HEK293T (cell line): ENCODE measurements at regions of chr12 and their contacts with region 1.

Region 1: DNA sequence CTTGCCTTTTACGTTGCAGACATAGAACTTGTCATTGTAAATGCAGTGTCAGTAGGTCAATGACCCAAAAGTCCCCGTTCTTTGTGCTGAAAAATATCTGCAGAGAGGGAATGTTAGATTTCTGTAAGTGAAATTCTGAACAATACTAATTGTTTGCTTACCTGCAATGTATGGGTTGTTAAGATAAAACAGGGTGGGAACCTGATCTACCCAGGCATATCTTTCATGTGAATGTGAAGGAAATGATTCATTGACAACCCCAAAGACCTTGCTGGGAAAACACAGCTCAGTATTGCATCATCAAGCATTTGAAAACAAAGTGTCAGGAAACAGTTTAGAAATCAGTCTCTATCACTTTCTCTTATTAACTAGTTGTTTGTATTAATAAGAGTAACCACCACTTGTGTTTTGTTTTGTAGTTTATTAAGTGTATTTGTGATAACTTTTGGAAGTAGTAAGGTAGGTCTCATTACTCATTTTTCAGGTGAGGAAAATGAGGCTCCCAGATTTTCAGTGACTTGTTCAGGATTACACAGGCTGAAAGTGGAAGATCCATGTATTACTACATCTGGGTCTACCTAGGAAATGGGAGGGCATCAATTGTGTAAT is 57.9 kb upstream of the SLC38A2 start:
- DNase-seq: no peak

Region 2: DNA sequence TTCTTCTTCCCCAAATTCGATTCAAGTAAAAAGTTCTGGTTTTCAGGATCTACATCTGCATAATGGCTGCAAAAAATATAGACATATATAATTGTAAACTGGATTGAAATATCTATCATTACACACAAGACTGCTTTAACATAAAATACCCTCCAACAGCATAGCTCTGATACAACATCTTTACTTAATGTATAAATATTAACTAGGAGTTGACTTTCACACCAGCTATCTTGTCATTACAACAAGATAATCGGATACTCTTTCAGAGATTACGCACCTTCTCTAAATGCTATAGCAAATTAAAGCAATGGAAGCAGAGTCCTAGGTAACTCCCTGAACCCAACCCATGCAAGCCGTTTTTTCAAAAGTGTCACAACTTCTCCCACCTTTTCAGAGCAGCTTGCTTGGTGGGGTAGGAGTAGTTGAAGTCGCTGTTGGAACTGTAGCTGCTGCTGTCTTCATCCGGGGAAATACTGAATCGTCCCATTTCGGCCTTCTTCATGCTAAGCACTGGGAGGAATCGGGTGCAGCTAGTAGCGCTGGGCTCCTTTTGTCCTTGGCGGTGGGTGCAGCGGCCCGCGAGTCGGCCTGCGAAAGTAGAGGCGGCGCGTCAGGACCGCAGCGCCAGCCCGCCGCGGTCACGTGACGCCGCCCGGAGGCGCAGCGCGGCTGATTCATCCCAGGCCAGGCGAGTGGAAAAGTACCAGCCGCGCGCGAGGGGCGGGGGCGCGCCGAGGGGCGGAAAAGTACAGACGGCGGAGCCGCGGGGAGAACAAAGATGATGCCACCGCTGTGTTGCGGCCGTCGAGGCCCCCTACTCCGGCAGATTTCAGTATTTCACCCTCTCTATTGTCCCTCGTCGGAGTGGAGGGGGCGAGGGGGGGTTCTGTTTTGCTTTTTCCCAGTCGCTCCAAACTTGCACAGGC is 59.4 kb before region 1 on chr12:
- CTCF ChIA-PET with region 1: no interaction called
- POLR2A ChIA-PET with region 1: interaction called, 11 read pairs
- DNase-seq: peak; percentile 90